ENCODE measurements at regions of chr12 and their contacts with region 1.

Region 1: GRCh38 chr12:124213666-124214347 is 81.1 kb upstream of the RFLNA start:
- DNase-seq: no peak
- H3K4me3 ChIP-seq: no peak overlapping the region
- H3K27ac ChIP-seq: no peak overlapping the region
- H3K4me1 ChIP-seq: no peaks in the 10 kb centered on the region
- H3K27me3 ChIP-seq: no peaks in the 10 kb centered on the region
- CTCF ChIP-seq: no peak
- POLR2A ChIP-seq: no peak

Region 2: GRCh38 chr12:124259154-124260066 is 45.6 kb after region 1 on chr12:
- intact Hi-C with region 1: loop called (anchors 1 kb)
- DNase-seq: no peak
- H3K4me3 ChIP-seq: no peak overlapping the region
- H3K27ac ChIP-seq: no peak overlapping the region
- H3K4me1 ChIP-seq: no peaks in the 10 kb centered on the region
- H3K27me3 ChIP-seq: no peaks in the 10 kb centered on the region
- CTCF ChIP-seq: no peak
- POLR2A ChIP-seq: no peak